Caco-2 (cell line): ENCODE measurements at regions of chr7 and their contacts with region 1.

Region 1: GRCh38 chr7:51732951-51733350 is 416.3 kb upstream of the COBL start:
- DNase-seq: peak in 1 of 2 experiments; percentile 6
- H3K4me3 ChIP-seq: no peak overlapping the region
- H3K4me3 Mint-ChIP-seq: no peak overlapping the region
- H3K27ac Mint-ChIP-seq: no peak overlapping the region
- H3K4me1 ChIP-seq: no peaks in the 10 kb centered on the region
- H3K4me1 Mint-ChIP-seq: no peaks in the 10 kb centered on the region
- H3K27me3 ChIP-seq: no peaks in the 10 kb centered on the region
- H3K27me3 Mint-ChIP-seq: peaks cover 1% of the 10 kb centered on the region
- CTCF ChIP-seq: peak in 1 of 2 experiments; percentile 28

Region 2: DNA sequence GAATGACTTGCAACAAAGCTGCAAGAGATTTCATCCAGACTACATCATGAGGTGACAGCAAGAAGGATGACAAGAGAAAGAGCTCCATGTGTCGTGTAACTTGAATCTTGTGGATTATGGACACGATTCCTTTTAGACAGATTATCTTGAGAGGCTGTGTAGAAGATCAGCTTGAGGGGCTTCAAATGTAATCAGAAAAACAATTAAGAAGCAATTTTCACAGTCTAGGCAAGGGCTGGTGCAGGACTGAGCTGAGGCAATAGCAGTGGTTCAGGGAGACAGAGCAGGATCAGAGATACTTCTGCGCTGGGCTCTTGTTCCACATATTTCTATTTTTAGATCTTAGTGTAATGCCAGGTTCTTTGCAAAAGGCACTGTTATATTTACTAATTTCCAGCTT is 163.4 kb before region 1 on chr7:
- CTCF ChIA-PET with region 1: no interaction called
- POLR2A ChIA-PET with region 1: no interaction called
- intact Hi-C with region 1: loop called (anchors 10 kb)
- DNase-seq: no peak
- H3K4me3 ChIP-seq: no peak overlapping the region
- H3K4me3 Mint-ChIP-seq: no peak overlapping the region
- H3K27ac Mint-ChIP-seq: no peak overlapping the region
- H3K4me1 ChIP-seq: no peaks in the 10 kb centered on the region
- H3K4me1 Mint-ChIP-seq: peaks cover 5% of the 10 kb centered on the region
- H3K27me3 ChIP-seq: no peaks in the 10 kb centered on the region
- H3K27me3 Mint-ChIP-seq: no peaks in the 10 kb centered on the region
- CTCF ChIP-seq: no peak